Heart left ventricle (tissue), 16 donors: ENCODE measurements at regions of chr3 and their contacts with region 1.

Region 1: DNA sequence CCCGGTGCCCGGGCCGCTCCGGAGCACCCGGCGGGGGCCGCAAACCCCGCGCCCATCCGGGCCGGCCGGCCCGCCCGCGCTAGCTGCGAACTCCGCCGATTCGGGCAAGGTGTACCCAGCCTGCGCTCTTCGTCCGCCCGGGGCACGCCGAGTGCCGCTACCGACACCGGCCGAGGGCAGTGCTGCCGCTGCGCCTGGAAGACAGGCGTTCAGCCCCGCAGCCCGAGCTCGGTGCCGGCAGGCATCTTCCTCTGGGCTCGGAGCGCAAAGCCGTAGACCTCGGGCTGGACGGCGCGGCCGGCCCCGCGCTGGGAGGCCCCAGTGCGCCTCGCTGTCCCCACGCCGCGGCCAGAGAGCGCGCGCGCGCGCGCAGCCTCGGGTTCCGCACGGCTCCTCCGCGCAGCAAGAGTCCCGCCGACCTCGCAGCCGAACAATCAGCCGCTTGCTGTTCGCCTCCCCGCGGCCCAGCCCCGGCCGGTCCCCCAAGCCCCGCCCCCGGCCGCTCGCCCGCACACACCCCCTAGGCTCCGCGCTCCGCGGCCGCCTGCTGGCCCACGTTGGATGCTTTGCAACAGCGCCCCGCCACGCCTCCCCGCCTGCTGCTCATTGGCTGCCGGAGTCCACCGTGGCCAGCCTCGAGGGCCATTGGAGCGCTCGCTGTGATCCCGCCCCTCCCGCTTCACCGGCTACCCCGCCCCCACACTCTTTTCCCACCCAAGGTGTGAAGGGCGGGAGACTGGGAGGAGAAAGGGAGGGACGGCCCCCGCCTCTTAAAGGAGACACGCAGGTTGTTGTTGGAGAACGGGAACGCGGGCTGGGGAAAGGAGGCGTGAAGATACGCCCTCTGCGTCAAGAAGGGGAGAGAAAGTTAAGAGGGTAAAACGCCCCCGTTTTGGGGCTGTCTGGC is at the start of gene LRIG1:
- DNase-seq: peak; percentile 100
- ATAC-seq: peak; percentile 96 to 97 (median 97)
- H3K4me3 ChIP-seq: peak within 1 kb of the TSS; percentile 81 to 98 (median 92)
- H3K27ac ChIP-seq: peak within 1 kb of the TSS; percentile 90 to 98 (median 94)
- H3K4me1 ChIP-seq: peaks cover 0 to 45% (median 36%) of the 10 kb centered on the region in 12 donors
- H3K27me3 ChIP-seq: no peaks in the 10 kb centered on the region
- CTCF ChIP-seq: peak; percentile 20 to 69 (median 51)
- POLR2A ChIP-seq: peak; percentile 33 to 86
- total RNA-seq, gene LRIG1: 71.0 to 161 (median 98.3) TPM

Region 2: GRCh38 chr3:66407611-66408218 is 93.1 kb before region 1 on chr3:
- intact Hi-C with region 1: loop called in 9 of 10 experiments (anchors 2 to 5 kb)
- DNase-seq: peak; percentile 71 to 87 (median 77)
- ATAC-seq: peak in 3 of 4 donors; percentile 48 to 57 (median 57)
- H3K4me3 ChIP-seq: no peak overlapping the region
- H3K27ac ChIP-seq: peak overlapping the region in 5 of 12 donors; percentile 57 to 82 (median 73)
- H3K4me1 ChIP-seq: peaks cover 4 to 90% (median 48%) of the 10 kb centered on the region in 12 donors
- H3K27me3 ChIP-seq: no peaks in the 10 kb centered on the region
- CTCF ChIP-seq: peak; percentile 89 to 96 (median 93)
- POLR2A ChIP-seq: no peak

Region 3: DNA sequence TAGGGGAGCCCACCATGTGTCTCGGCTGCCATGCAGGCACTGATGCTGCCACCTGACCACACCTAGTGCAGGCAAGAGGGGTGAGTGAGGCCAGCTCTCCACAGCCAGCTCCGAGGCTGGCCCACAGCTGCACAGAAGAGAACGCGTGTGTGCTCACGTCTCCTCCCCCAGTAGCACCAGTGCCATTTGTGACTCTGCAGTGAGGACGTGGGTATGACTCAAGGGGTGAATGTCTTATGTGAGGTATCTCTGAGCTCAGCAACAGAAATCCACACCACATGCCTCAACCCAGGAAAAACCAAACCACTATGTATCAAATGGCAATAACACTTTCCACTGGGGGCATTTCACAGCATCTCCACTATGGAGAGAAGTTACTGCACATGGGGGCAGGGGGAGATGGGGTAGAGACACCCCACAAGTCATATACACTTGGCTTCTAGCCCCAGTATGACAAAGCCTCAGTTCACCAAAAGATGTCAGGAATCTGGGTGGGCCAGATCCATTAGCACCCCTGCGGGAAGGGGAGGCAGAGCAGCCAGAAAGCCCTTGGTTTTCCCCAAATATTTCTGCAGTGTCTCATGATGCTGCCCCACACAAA is 87.6 kb before region 1 on chr3:
- intact Hi-C with region 1: loop called in 9 of 10 experiments (anchors 2 to 5 kb)
- DNase-seq: no peak
- ATAC-seq: peak in 1 of 4 donors; percentile 9
- H3K4me3 ChIP-seq: no peak overlapping the region
- H3K27ac ChIP-seq: peak overlapping the region in 9 of 12 donors; percentile 11 to 94 (median 78)
- H3K4me1 ChIP-seq: peaks cover 0 to 96% (median 50%) of the 10 kb centered on the region in 12 donors
- H3K27me3 ChIP-seq: no peaks in the 10 kb centered on the region
- CTCF ChIP-seq: no peak
- POLR2A ChIP-seq: no peak

Region 4: DNA sequence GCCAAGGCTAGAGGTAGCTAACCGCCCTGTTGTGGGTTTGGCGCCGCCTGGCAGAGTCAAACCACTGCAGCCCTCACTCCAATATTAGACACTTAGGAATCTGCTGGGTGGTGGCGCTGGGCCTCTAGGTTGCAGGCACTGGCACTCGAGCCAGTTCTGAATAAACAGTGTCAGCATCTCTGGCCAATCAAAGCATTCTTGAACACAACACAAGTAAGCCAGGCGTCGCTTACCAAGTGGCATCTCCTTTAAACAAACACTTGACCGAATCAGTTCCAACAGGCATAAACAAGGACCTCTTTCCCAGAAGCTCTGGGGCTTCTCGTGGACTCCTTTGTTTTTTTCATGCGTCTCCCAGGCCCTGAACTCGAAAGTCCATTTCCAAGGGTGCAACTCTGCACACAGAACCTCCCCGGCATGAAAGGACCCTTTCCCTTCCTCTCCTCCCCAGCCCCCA is 82.3 kb before region 1 on chr3:
- intact Hi-C with region 1: loop called in 4 of 10 experiments (anchors 2 to 5 kb)
- DNase-seq: peak in 1 of 5 donors; percentile 55
- ATAC-seq: peak; percentile 45 to 71 (median 68)
- H3K4me3 ChIP-seq: no peak overlapping the region
- H3K27ac ChIP-seq: peak overlapping the region in 10 of 12 donors; percentile 3 to 88 (median 54)
- H3K4me1 ChIP-seq: peaks cover 0 to 79% (median 37%) of the 10 kb centered on the region in 12 donors
- H3K27me3 ChIP-seq: no peaks in the 10 kb centered on the region
- CTCF ChIP-seq: peak in 6 of 12 donors; percentile 10 to 49 (median 27)
- POLR2A ChIP-seq: no peak